K562 (cell line): ENCODE measurements at regions of chr22 and their contacts with region 1.

Region 1: DNA sequence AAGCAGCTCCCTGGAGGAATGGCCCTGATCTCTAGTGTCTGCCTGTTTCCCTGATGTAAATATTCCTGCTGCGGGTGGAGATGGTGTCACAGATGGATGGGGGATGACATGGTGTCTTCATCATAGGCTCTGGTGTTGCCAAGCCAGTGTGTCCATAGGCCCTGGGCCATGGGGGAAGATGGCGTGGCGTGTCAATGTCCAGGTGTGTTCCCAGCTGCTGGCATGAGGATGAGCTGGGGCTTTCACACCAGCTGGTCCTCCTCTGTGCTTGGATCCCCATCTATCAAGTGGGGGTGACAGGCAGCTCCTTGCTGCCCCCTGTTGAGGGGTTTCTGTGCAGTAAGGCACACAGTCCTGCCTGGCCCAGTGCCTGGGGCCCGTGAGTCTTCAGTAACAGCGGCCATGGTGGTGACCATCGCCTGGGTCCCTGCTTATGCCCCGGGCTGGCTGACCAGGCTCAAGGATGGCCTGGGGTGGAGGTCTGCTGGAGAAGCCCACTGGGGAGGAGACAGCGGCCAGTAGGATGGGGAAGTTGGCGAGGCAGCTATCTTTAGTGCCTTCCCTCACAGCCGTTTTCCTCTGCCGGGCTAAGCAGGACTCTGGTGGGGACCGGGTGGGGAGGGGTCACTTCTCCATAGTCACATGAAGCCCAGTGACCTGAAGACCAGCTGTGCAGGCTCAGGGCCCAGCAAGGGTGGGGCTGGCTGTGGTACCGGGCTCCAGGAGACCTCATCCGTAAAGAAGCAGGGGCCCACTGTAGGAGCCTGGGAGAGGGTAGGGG is 12.7 kb downstream of the RPL3 start:
- DNase-seq: peak; percentile 60 to 76 (median 64)
- ATAC-seq: peak; percentile 52
- H3K4me3 ChIP-seq: no peak overlapping the region
- H3K27ac ChIP-seq: no peak overlapping the region
- H3K4me1 ChIP-seq: peaks cover 8 to 31% of the 10 kb centered on the region in 2 experiments; a peak in 4 of 5 replicates
- H3K27me3 ChIP-seq: no peaks in the 10 kb centered on the region
- CTCF ChIP-seq: peak; percentile 68 to 75 (median 74)
- EP300 ChIP-seq: no peak
- POLR2A ChIP-seq: no peak
- RAD21 ChIP-seq: peak; percentile 46 to 75

Region 2: GRCh38 chr22:39135090-39135896 is 171.5 kb before region 1 on chr22:
- CTCF ChIA-PET with region 1: no interaction called
- POLR2A ChIA-PET with region 1: interaction called, 8 read pairs
- in situ Hi-C with region 1: no loop called
- intact Hi-C with region 1: loop called (anchors 1 kb)
- DNase-seq: peak; percentile 64 to 71 (median 70)
- ATAC-seq: peak; percentile 95
- H3K4me3 ChIP-seq: no peak overlapping the region
- H3K27ac ChIP-seq: no peak overlapping the region
- H3K4me1 ChIP-seq: peaks cover 13 to 28% of the 10 kb centered on the region in 2 experiments
- H3K27me3 ChIP-seq: no peaks in the 10 kb centered on the region
- CTCF ChIP-seq: peak; percentile 70 to 79 (median 78)
- EP300 ChIP-seq: no peak
- POLR2A ChIP-seq: no peak
- RAD21 ChIP-seq: peak; percentile 33 to 67

Region 3: DNA sequence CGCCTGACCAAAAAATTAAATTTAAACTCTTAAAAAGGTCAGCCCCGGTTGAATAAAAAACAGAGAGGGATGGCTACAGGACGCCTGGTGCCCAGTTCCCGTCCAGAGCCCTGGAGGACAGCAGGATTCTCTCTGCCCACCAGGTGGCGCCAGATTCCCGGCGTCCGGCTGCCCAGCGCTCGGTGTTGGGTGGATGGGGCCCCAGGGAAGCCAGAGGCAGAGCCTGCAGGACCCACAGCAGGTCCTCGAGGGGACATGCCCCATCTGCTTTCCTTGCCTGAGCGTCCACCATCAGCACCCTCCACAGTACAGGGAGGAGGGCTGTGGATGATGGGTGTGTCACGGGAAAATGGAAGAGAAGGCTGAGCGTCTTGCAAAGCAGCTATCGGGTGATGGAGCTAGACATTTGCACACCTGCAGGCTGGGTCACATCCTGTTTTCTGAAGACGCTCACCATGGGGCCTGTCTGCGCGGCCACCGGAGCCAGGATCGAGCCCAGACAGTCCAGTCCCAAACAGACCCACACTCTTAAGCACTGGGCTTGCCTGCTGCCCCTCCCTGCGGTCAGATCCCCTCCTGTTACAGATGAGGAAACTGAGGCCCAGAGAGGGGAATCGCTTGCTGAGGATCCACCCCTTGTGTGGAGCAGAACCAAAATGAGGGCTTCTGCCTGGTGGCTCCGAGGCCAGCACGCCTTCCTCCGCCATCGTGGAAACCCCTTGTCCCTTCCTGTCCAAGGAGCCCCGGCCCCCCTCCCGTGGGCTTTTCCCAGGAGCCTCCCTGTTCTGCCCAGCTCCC is 135.7 kb before region 1 on chr22:
- CTCF ChIA-PET with region 1: interaction called, 6 read pairs
- POLR2A ChIA-PET with region 1: interaction called, 9 read pairs
- in situ Hi-C with region 1: loop called (anchors 5 kb)
- intact Hi-C with region 1: loop called (anchors 1 kb)
- DNase-seq: peak; percentile 71 to 79 (median 76)
- ATAC-seq: peak; percentile 98
- H3K4me3 ChIP-seq: no peak overlapping the region
- H3K27ac ChIP-seq: no peak overlapping the region
- H3K4me1 ChIP-seq: peaks cover 12 to 23% of the 10 kb centered on the region in 2 experiments; a peak in 4 of 5 replicates
- H3K27me3 ChIP-seq: no peaks in the 10 kb centered on the region
- CTCF ChIP-seq: peak; percentile 80 to 93 (median 87)
- EP300 ChIP-seq: no peak
- POLR2A ChIP-seq: no peak
- RAD21 ChIP-seq: peak; percentile 88 to 96

Region 4: DNA sequence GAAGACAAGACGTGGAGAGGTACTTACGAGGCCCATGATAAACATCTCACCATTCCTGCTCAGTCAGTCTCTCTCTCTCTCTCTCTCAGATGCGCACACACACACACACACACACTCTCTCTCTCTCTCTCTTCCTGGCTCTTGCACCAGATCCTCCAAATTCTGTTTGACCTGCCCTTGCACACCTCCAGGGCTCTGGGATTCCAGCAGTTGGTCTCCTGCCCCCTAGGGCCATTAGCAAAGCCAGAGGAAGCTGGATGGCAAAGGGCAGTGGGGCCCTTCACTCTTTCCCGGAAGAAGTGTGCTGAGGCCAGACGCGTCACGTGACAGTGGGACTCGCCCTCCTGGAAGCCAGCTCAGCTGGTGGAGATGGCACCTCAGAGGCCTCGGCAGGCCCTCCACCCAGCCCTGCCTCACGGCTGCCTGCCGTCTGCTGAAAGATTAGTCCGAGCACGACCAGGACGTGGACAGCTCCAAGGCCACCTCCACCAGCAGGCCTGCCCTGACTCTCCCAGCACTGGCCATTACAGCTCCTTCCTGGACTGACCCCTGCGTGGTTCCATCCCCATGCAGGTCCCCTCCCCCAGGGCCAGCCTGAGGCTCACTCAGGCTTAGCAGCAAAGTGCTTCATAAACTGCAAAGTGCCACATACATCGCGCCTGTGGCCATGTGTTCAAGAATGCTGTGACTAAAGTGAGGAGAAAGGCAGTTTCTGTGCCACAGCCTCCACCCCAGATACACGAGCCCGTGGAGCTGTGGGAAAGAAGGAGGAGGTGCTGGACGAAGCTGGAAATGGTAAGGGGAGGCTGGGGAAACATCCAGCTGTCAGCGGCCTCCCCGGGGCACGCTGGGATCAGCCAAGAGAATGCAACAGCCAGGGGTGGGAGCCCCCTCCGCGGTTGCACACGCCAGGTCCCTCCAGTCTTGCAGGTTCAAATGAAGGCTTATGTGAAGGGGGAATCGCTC is 65.7 kb before region 1 on chr22:
- CTCF ChIA-PET with region 1: no interaction called
- POLR2A ChIA-PET with region 1: interaction called, 3 read pairs
- in situ Hi-C with region 1: no loop called
- intact Hi-C with region 1: loop called (anchors 10 kb)
- DNase-seq: peak in 3 of 4 experiments; percentile 30 to 42 (median 38)
- ATAC-seq: peak; percentile 45
- H3K4me3 ChIP-seq: no peak overlapping the region
- H3K27ac ChIP-seq: no peak overlapping the region
- H3K4me1 ChIP-seq: peaks cover 24 to 71% of the 10 kb centered on the region in 2 experiments; a peak in 4 of 5 replicates
- H3K27me3 ChIP-seq: peaks cover 0 to 4% of the 10 kb centered on the region in 2 experiments; a peak in 2 of 5 replicates
- CTCF ChIP-seq: no peak
- EP300 ChIP-seq: no peak
- POLR2A ChIP-seq: no peak
- RAD21 ChIP-seq: no peak